ENCODE measurements at regions of chr18 and their contacts with region 1.

Region 1: DNA sequence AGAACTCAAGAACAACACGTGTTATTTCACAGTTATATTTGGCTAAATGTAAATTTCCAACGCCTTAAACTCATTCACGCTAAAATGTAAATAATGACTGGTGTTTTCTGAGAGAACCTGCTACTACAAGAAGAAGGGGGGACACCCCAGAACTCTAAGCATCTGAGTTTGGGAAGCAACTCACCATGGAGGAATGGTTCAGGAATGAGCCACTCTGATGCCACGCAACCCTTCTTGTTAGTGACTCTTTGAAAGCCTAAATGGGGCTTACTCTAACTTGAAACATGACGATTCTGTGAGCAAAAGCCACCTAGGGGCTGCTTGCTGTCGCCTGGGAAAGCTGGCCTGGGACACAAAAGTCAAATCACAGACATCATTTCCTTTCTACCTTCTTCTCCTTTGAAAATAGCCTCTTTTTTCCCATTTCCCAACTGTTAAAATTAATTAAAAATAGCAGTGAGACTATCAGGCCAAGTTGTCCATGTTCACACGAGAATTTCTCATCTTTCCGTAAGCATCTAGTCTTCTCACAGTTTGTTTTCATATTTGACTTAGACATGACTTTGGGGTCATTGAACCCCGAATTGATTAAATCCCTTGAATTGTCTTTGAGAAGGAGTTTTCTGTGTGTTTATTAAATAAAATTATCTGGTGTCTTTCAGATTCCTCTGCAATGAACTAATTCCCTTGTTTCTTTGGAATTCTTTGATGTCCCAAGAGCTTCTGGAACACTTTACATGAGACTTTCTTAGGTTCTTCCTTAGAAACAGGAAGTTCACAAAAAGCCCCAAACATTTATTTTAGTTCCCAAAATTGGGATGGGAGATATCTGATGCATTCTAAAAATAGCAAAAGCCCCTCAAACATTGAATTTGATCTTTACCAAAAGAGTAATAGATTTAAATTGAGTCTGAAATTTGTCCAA is 75.5 kb upstream of the CABLES1 start:
- DNase-seq: no peak
- H3K4me3 ChIP-seq: no peak overlapping the region
- H3K27ac ChIP-seq: no peak overlapping the region
- H3K4me1 ChIP-seq: no peaks in the 10 kb centered on the region
- H3K27me3 ChIP-seq: no peaks in the 10 kb centered on the region
- CTCF ChIP-seq: no peak

Region 2: GRCh38 chr18:23106580-23106979 is 46.8 kb after region 1 on chr18:
- CTCF ChIA-PET with region 1: no interaction called
- dilution Hi-C with region 1: loop called (anchors 5 kb)
- in situ Hi-C with region 1: no loop called
- intact Hi-C with region 1: no loop called
- DNase-seq: peak; percentile 96
- H3K4me3 ChIP-seq: no peak overlapping the region
- H3K27ac ChIP-seq: peak overlapping the region; percentile 95
- H3K4me1 ChIP-seq: peaks cover 33% of the 10 kb centered on the region
- H3K27me3 ChIP-seq: no peaks in the 10 kb centered on the region
- CTCF ChIP-seq: peak in 1 of 2 donors; percentile 28